Right lobe of liver (tissue), 6 donors: ENCODE measurements at regions of chr3 and their contacts with region 1.

Region 1: GRCh38 chr3:134364061-134364935 is 9.9 kb downstream of the AMOTL2 start:
- DNase-seq: peak; percentile 82 to 88 (median 84)
- ATAC-seq: peak; percentile 84 to 91 (median 87)
- H3K4me3 ChIP-seq: no peak overlapping the region
- H3K27ac ChIP-seq: peak overlapping the region; percentile 51 to 59 (median 53)
- H3K4me1 ChIP-seq: peaks cover 0 to 48% (median 20%) of the 10 kb centered on the region in 4 donors
- H3K27me3 ChIP-seq: no peaks in the 10 kb centered on the region
- CTCF ChIP-seq: no peak
- POLR2A ChIP-seq: no peak

Region 2: GRCh38 chr3:134320749-134321148 is 43.5 kb before region 1 on chr3:
- intact Hi-C with region 1: loop called in 1 of 2 experiments (anchors 5 kb)
- DNase-seq: no peak
- ATAC-seq: no peak
- H3K4me3 ChIP-seq: no peak overlapping the region
- H3K27ac ChIP-seq: no peak overlapping the region
- H3K4me1 ChIP-seq: no peaks in the 10 kb centered on the region
- H3K27me3 ChIP-seq: no peaks in the 10 kb centered on the region
- CTCF ChIP-seq: no peak
- POLR2A ChIP-seq: no peak